Activated CD8-positive, alpha-beta T cell treated with anti-CD3 and anti-CD28 coated beads, Interleukin-2, amount 10 ng/mL, durations not matched to agents 7 days and 5 days (primary cell): ENCODE measurements at regions of chr11 and their contacts with region 1.

Region 1: DNA sequence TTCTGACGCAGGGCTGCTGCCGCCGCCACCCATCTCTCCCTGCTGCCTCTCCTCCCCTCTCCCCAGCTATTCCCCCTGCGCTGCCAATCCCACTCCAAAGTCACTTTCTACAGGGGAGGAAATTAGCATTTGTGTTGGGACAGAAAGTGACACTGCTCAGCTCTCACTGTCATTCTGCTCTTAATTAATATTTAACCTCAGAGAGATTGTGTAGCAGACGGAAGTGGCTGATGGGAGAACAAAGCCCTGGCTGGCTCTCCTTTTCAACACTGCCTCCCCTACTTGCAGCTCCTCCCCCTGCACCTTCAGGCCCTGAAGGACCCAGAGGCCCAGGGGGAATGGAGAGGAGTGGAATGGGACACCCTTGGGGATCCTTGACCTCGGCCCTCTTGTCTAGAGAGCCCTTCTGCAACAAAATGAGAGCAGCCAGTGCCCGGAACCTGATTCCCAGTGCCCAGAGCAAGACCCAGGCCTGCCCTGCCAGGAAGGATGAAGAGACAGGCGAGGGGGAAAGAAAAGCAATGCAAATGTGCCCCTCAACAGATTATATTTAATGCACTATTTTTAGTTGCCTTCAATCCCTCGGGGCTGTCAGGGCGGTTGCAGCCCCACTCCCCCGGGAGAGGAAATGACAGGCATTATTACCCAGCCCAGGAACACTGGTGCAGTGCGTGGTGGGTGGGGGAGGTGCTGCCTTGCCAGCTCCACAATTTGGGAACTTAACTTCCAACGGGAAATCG is 14.6 kb upstream of the NRGN start:
- DNase-seq: no peak
- ATAC-seq: no peak
- H3K4me3 Mint-ChIP-seq: no peak overlapping the region
- H3K27ac Mint-ChIP-seq: no peak overlapping the region
- H3K4me1 Mint-ChIP-seq: peaks cover 11% of the 10 kb centered on the region
- H3K27me3 Mint-ChIP-seq: peaks cover 48% of the 10 kb centered on the region

Region 2: DNA sequence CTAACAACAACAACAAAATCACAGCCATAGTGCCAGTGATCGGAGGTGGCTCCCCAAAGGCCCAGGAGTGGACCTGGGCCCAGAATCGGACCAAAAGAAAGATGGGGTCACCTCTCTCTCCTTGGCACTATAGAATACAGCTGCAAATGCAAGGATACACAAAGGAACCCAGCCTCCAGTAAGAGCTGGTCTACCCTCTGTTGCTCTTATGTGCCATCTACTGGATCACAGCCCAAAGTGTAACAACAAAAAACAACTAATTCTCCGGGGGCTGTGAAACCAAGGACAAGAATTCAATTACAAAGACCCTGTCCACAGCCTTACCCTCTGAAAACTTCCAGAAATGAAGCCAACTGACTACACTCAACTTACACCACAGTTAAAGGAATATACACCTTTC is 447.3 kb before region 1 on chr11:
- CTCF ChIA-PET with region 1: no interaction called
- POLR2A ChIA-PET with region 1: no interaction called
- DNase-seq: no peak
- ATAC-seq: no peak
- H3K4me3 Mint-ChIP-seq: no peak overlapping the region
- H3K27ac Mint-ChIP-seq: no peak overlapping the region
- H3K4me1 Mint-ChIP-seq: peaks cover 7% of the 10 kb centered on the region
- H3K27me3 Mint-ChIP-seq: no peaks in the 10 kb centered on the region

Region 3: DNA sequence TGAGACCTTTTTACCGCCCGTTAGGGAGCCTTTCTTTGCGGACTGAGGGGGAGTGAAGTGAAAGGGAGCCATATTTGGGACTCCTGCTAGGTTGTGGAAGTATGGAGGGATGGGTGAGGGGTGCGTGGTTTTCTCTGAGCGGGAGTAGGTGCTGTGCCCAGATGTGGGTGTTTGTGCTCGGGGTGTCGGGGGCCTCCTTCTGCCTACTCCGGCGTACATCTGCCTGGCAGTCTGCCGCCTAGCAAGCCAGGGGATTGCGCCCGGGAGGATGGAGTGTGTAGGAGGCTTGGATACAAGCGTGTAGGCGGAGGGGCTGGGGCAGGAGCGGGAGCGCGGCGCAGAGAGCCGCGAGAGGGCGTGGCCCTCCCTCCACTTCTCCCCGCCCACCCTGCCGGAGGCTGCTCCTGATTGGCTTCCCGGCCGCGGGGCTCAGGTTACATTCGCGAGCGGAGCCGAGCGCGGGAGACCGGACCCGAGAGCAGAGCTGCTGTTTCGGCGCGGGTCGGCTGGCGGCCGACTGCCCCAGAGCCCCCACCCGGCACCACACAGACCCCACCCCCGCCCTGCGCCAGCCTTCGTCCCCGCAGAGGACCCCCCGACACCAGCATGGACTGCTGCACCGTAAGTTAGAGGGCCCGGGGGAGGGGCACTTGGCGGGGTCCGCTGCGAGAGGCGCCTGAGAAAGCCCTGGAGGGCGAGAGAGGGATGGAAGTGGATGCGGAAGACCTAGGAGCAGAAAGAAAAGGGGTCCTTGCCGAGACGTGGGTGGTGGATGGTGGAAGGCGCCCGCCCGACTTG is 14.5 kb after region 1 on chr11 and contains the start of gene NRGN:
- CTCF ChIA-PET with region 1: interaction called, 11 read pairs
- POLR2A ChIA-PET with region 1: no interaction called
- DNase-seq: peak; percentile 89
- ATAC-seq: peak; percentile 98
- H3K4me3 Mint-ChIP-seq: peak within 1 kb of the TSS; percentile 77
- H3K27ac Mint-ChIP-seq: no peak within 1 kb of the TSS
- H3K4me1 Mint-ChIP-seq: peaks cover 14% of the 10 kb centered on the region
- H3K27me3 Mint-ChIP-seq: peaks cover 44% of the 10 kb centered on the region
- total RNA-seq, gene NRGN: 5.7 to 6.1 TPM